ENCODE measurements at regions of chr20 and their contacts with region 1.

Region 1: DNA sequence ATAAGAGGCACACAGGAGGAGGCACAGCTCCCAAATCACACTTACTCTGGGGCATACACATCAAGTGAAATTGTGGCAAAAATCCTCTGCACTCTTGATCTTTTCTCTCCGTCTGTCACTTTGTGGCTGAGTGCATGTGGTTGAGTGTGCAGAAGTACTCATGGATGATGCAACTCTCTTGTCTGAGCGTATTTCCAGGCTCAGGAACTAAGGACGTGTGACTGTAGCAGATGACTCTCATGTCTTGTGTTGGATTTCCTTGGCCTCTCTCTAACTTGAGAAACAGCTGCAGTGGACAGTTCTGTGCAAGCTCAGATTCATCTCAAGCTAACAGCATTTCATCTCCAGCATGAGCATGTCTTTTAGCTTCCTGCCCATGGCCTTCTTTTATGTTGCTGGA is 245.4 kb upstream of the FLRT3 start:
- DNase-seq: no peak
- ATAC-seq: no peak

Region 2: DNA sequence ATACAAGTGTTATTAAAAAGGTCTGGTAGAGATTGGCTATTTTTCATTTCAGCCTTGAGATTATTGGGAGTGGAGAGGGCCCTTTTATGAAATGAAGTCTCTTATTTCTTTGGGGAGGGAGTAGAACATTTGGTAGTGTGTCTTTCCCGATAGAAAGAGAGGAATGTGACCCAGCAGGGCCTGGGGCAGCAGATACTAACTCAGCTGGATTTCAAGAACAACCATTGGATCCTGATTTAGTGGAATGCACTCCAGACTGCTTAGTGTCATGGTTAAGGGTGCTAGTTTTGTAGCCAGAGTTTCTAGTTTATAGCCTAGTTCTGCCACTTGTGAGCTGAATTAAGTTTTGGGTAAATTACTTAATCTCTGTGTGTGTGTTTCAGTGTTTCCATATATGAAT is 227.1 kb before region 1 on chr20:
- intact Hi-C with region 1: loop called (anchors 10 kb)
- DNase-seq: no peak
- ATAC-seq: no peak

Region 3: GRCh38 chr20:14526891-14527290 is 56.0 kb before region 1 on chr20:
- intact Hi-C with region 1: no loop called
- DNase-seq: no peak
- ATAC-seq: no peak